ENCODE measurements at regions of chr10 and their contacts with region 1.

Region 1: GRCh38 chr10:99329524-99330235 is 524 bp downstream of the CNNM1 start:
- DNase-seq: no peak
- ATAC-seq: peak; percentile 80
- H3K4me3 ChIP-seq: peak overlapping the region; percentile 54 to 76 (median 55); a peak in 5 of 6 replicates
- H3K27ac ChIP-seq: peak overlapping the region; percentile 52
- H3K4me1 ChIP-seq: peaks cover 54% of the 10 kb centered on the region
- H3K27me3 ChIP-seq: no peaks in the 10 kb centered on the region
- CTCF ChIP-seq: peak; percentile 40; the same call in 1 of the 2 replicates
- EP300 ChIP-seq: no peak
- POLR2A ChIP-seq: no peak
- RAD21 ChIP-seq: no peak; the same call in 1 of the 2 replicates

Region 2: GRCh38 chr10:98815039-98815885 is 514.4 kb before region 1 on chr10:
- CTCF ChIA-PET with region 1: no interaction called
- POLR2A ChIA-PET with region 1: no interaction called
- in situ Hi-C with region 1: no loop called
- intact Hi-C with region 1: no loop called
- DNase-seq: no peak
- ATAC-seq: no peak
- H3K4me3 ChIP-seq: no peak overlapping the region
- H3K27ac ChIP-seq: no peak overlapping the region
- H3K4me1 ChIP-seq: no peaks in the 10 kb centered on the region
- H3K27me3 ChIP-seq: no peaks in the 10 kb centered on the region
- CTCF ChIP-seq: no peak
- EP300 ChIP-seq: no peak
- POLR2A ChIP-seq: no peak
- RAD21 ChIP-seq: no peak

Region 3: GRCh38 chr10:99370993-99371392 is 41.3 kb after region 1 on chr10:
- CTCF ChIA-PET with region 1: no interaction called
- POLR2A ChIA-PET with region 1: no interaction called
- in situ Hi-C with region 1: no loop called
- intact Hi-C with region 1: loop called (anchors 5 kb)
- DNase-seq: peak; percentile 59
- ATAC-seq: peak; percentile 89
- H3K4me3 ChIP-seq: no peak overlapping the region
- H3K27ac ChIP-seq: no peak overlapping the region
- H3K4me1 ChIP-seq: peaks cover 34% of the 10 kb centered on the region; the same call in 1 of the 2 replicates
- H3K27me3 ChIP-seq: no peaks in the 10 kb centered on the region
- CTCF ChIP-seq: peak; percentile 68
- EP300 ChIP-seq: no peak
- POLR2A ChIP-seq: no peak
- RAD21 ChIP-seq: 0 out of 2 replicates have a peak, but pooled peaks have one; percentile 34

Region 4: DNA sequence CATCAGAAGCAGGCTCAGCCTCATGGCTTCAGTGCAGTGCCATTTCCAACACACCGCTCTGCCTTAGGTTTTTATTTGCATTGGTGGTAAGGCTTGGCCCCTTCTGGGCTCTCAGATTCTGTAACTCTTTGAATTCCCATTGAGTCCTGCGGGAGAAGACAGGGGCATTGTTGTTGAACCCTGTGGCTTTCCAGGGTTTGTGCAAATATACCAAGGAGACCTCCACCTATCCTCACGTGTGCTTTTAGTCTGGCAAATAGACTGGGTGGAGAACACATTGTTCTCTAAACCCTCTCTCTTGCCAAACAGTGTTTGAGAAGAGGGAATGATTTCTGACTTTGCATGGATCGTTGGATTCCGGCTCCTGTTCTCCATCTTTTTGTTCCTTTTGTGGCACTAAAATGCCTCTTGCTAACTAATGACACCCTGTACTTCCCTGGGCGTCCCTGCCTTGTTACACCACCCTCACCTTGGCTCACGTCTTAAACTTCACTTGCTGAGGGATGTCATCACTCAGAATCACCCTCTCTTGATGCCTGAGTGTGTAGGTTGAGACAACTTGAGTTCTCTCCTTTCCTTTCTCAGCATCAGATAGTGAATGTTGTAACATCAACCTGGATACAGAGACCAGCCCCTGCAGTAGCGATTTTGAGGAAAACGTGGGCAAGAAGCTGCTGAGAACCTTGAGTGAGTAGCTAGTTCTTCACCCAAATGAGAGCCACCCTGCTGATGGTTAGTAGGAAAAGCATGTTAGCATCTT is 60.2 kb after region 1 on chr10:
- CTCF ChIA-PET with region 1: no interaction called
- POLR2A ChIA-PET with region 1: no interaction called
- in situ Hi-C with region 1: no loop called
- intact Hi-C with region 1: loop called (anchors 5 kb)
- DNase-seq: peak; percentile 94
- ATAC-seq: peak; percentile 70
- H3K4me3 ChIP-seq: no peak overlapping the region
- H3K27ac ChIP-seq: peak overlapping the region; percentile 20
- H3K4me1 ChIP-seq: peaks cover 54% of the 10 kb centered on the region
- H3K27me3 ChIP-seq: peaks cover 0 to 7% of the 10 kb centered on the region in 2 experiments; a peak in 1 of 5 replicates
- CTCF ChIP-seq: no peak
- EP300 ChIP-seq: peak in 1 of 2 experiments; percentile 48; a peak in 1 of 4 replicates
- POLR2A ChIP-seq: no peak
- RAD21 ChIP-seq: no peak

Measured in HepG2 (cell line).